Activated CD4-positive, alpha-beta memory T cell treated with anti-CD3 and anti-CD28 coated beads for 36 hours (primary cell): ENCODE measurements at regions of chr9 and their contacts with region 1.

Region 1: DNA sequence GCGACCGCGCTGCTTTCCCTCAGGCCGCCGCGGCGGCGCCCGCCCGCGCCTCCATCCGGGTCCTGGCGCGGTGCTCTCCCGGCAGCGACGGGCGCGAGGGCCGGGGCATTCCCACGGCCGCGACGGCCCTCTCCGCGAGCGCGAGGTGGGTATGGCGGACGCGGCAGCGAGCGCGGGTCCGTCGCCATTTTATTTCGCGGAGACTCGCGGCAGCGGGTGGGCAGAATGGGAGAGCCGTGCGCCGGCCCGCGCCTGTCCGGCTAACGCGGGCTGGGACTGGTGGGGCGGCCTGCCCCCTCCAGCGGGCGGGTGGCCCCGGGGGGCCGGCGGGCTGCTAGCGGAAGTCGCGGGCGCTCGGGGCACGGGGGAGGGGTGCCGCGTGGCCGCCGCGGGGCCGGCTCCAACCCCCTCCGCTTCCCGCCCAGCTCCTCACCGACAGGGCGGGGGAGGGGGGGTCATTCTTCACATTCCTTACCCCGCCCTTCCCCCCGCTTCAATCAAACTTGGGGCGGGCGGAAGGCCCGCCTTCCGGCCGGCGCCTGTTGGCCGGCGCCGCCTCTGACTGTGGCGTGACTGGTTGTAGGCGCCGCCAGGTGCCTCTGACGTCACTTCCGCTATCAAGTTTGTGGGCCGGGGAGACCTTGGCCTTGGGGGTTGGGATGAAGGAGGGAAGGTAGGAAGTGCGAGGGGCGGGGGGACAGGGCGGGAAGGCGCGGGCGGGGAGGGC is 82.1 kb downstream of the PTPDC1 start:
- DNase-seq: peak; percentile 97
- H3K4me3 Mint-ChIP-seq: peak overlapping the region; percentile 81
- H3K27ac Mint-ChIP-seq: peak overlapping the region; percentile 81
- H3K4me1 Mint-ChIP-seq: peaks cover 43% of the 10 kb centered on the region
- H3K27me3 Mint-ChIP-seq: no peaks in the 10 kb centered on the region

Region 2: DNA sequence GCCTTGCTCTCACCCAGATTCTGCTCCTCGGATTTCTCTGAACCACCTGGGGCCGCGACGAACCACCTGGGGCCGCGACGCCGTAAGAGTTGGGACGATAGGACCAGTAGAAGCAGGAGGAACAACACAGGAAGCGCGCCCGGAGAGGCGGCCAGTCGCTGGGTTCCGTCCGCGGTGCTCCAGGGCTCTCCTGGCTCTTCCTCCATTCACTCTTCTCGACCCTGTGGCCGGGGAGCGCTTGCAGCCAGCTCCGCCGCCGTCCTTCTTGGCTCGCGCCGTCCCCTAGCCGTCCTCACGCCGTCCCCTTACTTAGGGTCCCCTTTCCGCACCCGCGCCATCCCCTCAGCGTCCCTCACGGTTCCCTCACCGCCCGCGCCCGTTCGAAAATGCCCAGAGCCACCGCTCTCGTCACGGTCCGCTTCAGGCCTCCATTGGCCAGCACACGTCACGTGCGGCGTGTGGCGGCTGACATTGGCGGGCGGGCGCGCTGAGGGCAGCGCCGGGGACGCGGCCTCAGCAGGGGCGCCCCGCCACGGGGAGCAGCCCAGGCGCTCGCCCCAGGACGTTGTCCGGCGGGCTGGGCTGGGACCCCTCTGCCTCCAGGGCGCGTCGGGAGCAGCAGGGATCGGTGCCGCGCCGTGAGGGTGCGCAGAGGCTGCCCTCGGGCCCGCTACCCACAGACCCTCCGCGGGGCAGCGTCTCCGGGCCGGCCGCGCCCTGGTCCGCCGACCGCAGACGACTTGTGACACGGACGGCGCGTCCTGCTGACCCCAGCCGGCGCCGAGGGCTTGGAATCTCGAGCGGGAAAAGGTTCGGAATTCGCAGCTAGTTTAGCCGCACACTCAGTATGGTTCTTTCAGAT is 135.9 kb before region 1 on chr9:
- CTCF ChIA-PET with region 1: no interaction called
- POLR2A ChIA-PET with region 1: no interaction called
- intact Hi-C with region 1: loop called (anchors 2 kb)
- DNase-seq: peak; percentile 86
- H3K4me3 Mint-ChIP-seq: peak overlapping the region; percentile 97
- H3K27ac Mint-ChIP-seq: peak overlapping the region; percentile 87
- H3K4me1 Mint-ChIP-seq: peaks cover 17% of the 10 kb centered on the region
- H3K27me3 Mint-ChIP-seq: peaks cover 2% of the 10 kb centered on the region

Region 3: DNA sequence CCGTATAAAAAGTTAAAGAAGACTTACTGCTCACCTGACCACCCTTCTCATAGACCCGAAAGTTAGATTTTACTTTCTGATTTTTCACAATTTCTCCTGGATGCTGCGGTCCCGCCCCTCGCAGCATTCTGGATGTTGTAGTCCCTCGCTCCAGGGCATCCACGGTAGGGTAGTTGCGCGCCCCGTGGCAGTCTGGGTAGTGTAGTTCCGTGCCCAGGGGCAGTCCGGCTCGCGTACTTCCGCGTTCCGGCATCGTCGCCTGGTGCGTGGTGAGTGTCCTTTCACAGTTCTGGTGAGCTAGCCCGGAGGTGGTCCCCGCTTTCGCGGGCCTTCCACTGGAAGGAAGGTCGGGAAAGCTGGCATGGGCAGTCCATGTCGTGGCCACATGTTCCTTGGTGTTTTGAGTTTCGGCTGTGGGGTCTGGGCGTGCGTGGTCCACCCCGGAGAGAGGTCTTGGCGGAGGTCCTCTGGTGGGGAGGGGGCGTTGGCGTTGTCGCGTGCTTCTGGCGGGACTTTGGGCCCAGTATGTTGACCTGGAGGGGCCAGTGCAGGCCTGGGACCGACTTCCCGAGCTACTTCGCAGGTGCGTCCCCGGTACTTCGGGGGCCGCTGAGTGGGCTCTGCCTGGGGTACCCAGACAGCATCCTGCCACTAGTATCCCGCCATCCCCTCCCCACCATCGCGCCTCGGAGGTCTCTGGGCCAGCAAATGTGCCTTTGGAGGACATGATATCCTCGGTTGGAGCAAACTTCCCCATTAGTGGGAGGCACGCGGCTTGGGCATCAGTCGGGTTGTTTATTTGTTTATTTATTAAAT is 92.9 kb after region 1 on chr9 and contains the start of gene ZNF169:
- CTCF ChIA-PET with region 1: no interaction called
- POLR2A ChIA-PET with region 1: no interaction called
- intact Hi-C with region 1: loop called (anchors 2 kb)
- DNase-seq: peak; percentile 94
- H3K4me3 Mint-ChIP-seq: peak within 1 kb of the TSS; percentile 100
- H3K27ac Mint-ChIP-seq: peak within 1 kb of the TSS; percentile 92
- H3K4me1 Mint-ChIP-seq: peaks cover 36% of the 10 kb centered on the region
- H3K27me3 Mint-ChIP-seq: peaks cover 4% of the 10 kb centered on the region
- total RNA-seq, gene ZNF169: 5.7 to 6.0 TPM